ENCODE measurements at regions of chr13 and their contacts with region 1.

Region 1: GRCh38 chr13:110444226-110444653 is 117.3 kb downstream of the RAB20 start:
- DNase-seq: peak; percentile 8
- ATAC-seq: peak; percentile 58
- H3K4me3 ChIP-seq: no peak overlapping the region
- H3K27ac ChIP-seq: no peak overlapping the region
- H3K4me1 ChIP-seq: peaks cover 22 to 28% of the 10 kb centered on the region in 2 experiments
- H3K27me3 ChIP-seq: no peaks in the 10 kb centered on the region
- CTCF ChIP-seq: peak; percentile 32 to 51 (median 50); a peak in 3 of 6 replicates
- POLR2A ChIP-seq: no peak
- RAD21 ChIP-seq: peak; percentile 74

Region 2: DNA sequence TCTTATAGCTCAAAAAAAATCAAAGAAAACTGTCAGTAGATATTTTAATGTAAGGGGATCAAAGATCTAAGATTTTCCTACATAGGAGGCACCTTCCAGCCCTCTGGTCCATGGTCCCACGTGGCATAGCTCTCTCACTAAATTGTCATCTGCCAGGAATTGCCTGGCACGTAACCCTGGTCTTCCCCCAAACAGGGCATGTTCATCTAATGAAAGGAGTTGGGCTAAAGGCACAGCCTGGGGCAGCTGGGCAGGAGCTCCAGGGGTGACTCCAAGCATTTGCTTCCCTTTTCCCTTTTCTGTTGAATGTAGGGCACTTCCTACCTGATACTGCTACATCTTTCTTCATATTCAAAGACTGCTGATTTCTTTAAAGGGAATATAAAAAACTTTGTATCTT is 286.0 kb before region 1 on chr13:
- CTCF ChIA-PET with region 1: interaction called, 11 read pairs
- POLR2A ChIA-PET with region 1: no interaction called
- RAD21 ChIA-PET with region 1: no interaction called
- intact Hi-C with region 1: no loop called
- DNase-seq: no peak
- ATAC-seq: no peak
- H3K4me3 ChIP-seq: no peak overlapping the region
- H3K27ac ChIP-seq: no peak overlapping the region
- H3K4me1 ChIP-seq: peaks cover 0 to 10% of the 10 kb centered on the region in 2 experiments; a peak in 2 of 4 replicates
- H3K27me3 ChIP-seq: no peaks in the 10 kb centered on the region
- CTCF ChIP-seq: no peak
- POLR2A ChIP-seq: no peak
- RAD21 ChIP-seq: no peak

Region 3: DNA sequence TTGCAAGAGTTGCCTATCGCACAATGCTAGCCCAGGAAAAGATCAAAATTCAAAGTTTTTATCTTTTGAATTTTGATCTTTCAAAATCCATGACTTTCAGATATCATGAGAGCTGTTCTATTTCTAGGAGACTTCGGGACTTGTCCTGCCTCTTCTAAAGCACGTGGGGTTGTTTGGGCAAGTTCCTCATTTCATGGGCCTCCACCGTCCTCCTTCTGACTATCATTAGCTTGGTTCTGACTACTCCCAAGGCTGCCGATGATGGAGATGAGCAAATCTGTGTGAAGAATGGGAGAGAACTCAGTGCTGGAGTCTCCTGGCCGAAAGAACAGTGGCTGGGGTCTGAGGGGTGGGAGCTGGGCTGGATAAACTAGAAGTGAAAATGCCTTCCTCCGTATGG is 223.8 kb before region 1 on chr13:
- CTCF ChIA-PET with region 1: interaction called, 18 read pairs
- POLR2A ChIA-PET with region 1: interaction called, 4 read pairs
- RAD21 ChIA-PET with region 1: no interaction called
- intact Hi-C with region 1: loop called (anchors 1 kb)
- DNase-seq: no peak
- ATAC-seq: no peak
- H3K4me3 ChIP-seq: no peak overlapping the region
- H3K27ac ChIP-seq: no peak overlapping the region
- H3K4me1 ChIP-seq: peaks cover 0 to 4% of the 10 kb centered on the region in 2 experiments; a peak in 1 of 4 replicates
- H3K27me3 ChIP-seq: no peaks in the 10 kb centered on the region
- CTCF ChIP-seq: no peak
- POLR2A ChIP-seq: no peak
- RAD21 ChIP-seq: no peak

Region 4: GRCh38 chr13:110225609-110226562 is 218.4 kb before region 1 on chr13:
- CTCF ChIA-PET with region 1: interaction called, 18 read pairs
- POLR2A ChIA-PET with region 1: no interaction called
- RAD21 ChIA-PET with region 1: no interaction called
- intact Hi-C with region 1: loop called (anchors 1 kb)
- DNase-seq: no peak
- ATAC-seq: no peak
- H3K4me3 ChIP-seq: no peak overlapping the region
- H3K27ac ChIP-seq: no peak overlapping the region
- H3K4me1 ChIP-seq: peaks cover 0 to 4% of the 10 kb centered on the region in 2 experiments; a peak in 1 of 4 replicates
- H3K27me3 ChIP-seq: no peaks in the 10 kb centered on the region
- CTCF ChIP-seq: no peak
- POLR2A ChIP-seq: no peak
- RAD21 ChIP-seq: no peak

Region 5: DNA sequence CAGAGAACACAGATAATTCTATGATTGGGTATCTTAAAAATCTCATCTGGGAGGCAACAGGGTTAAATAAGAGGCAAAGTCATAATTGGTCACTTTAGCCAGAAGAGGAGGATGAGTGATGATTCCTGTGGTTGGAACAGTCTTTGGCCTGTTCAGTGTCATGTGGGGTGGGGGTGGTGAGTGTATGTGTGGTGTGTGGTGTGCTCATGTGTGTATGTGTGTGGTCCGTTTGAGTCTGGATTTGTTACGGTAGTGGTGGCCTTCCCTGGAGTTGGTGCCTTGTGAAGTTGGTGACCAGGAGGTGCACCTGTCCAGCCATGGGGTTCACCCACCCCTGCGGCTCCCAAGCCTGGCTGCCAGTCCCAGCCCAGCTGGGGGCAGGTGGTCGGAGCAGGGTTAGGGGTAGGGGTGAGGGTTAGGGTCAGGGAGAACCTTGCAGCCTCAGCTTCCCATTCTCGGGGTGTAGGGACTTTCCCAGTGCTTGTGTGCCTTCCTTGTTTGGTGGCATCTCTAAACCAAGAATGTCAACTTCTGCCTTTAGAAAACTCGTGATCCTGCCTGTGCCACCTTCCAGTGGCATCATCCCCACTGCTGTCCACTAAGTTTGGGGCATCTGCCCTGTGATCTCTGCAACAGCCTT is 19.8 kb after region 1 on chr13:
- CTCF ChIA-PET with region 1: no interaction called
- POLR2A ChIA-PET with region 1: no interaction called
- RAD21 ChIA-PET with region 1: no interaction called
- intact Hi-C with region 1: no loop called
- DNase-seq: no peak
- ATAC-seq: no peak
- H3K4me3 ChIP-seq: no peak overlapping the region
- H3K27ac ChIP-seq: no peak overlapping the region
- H3K4me1 ChIP-seq: no peaks in the 10 kb centered on the region
- H3K27me3 ChIP-seq: no peaks in the 10 kb centered on the region
- CTCF ChIP-seq: no peak
- POLR2A ChIP-seq: no peak
- RAD21 ChIP-seq: no peak

Region 6: GRCh38 chr13:110644892-110645521 is 200.8 kb after region 1 on chr13:
- CTCF ChIA-PET with region 1: no interaction called
- POLR2A ChIA-PET with region 1: no interaction called
- RAD21 ChIA-PET with region 1: no interaction called
- intact Hi-C with region 1: no loop called
- DNase-seq: no peak
- ATAC-seq: peak; percentile 52
- H3K4me3 ChIP-seq: no peak overlapping the region
- H3K27ac ChIP-seq: no peak overlapping the region
- H3K4me1 ChIP-seq: no peaks in the 10 kb centered on the region
- H3K27me3 ChIP-seq: no peaks in the 10 kb centered on the region
- CTCF ChIP-seq: 0 out of 6 replicates have a peak, but pooled peaks of 1 of the 3 experiments have one; percentile 13
- POLR2A ChIP-seq: no peak
- RAD21 ChIP-seq: peak; percentile 36; the same call in 1 of the 2 replicates